HepG2 (cell line): ENCODE measurements at regions of chr18 and their contacts with region 1.

Region 1: GRCh38 chr18:5969989-5970403 is 74.7 kb upstream of the TMEM200C start:
- DNase-seq: peak; percentile 87
- ATAC-seq: peak; percentile 98
- H3K4me3 ChIP-seq: no peak overlapping the region
- H3K27ac ChIP-seq: peak overlapping the region; percentile 64
- H3K4me1 ChIP-seq: peaks cover 52% of the 10 kb centered on the region
- H3K27me3 ChIP-seq: no peaks in the 10 kb centered on the region
- CTCF ChIP-seq: peak; percentile 73
- EP300 ChIP-seq: peak in 1 of 2 experiments; percentile 79; a peak in 2 of 4 replicates
- POLR2A ChIP-seq: no peak
- RAD21 ChIP-seq: no peak

Region 2: GRCh38 chr18:6056146-6056932 is 86.3 kb after region 1 on chr18:
- CTCF ChIA-PET with region 1: no interaction called
- POLR2A ChIA-PET with region 1: no interaction called
- in situ Hi-C with region 1: no loop called
- intact Hi-C with region 1: loop called (anchors 1 kb)
- DNase-seq: peak; percentile 57
- ATAC-seq: peak; percentile 96
- H3K4me3 ChIP-seq: no peak overlapping the region
- H3K27ac ChIP-seq: peak overlapping the region; percentile 50
- H3K4me1 ChIP-seq: peaks cover 47% of the 10 kb centered on the region
- H3K27me3 ChIP-seq: no peaks in the 10 kb centered on the region
- CTCF ChIP-seq: no peak
- EP300 ChIP-seq: no peak
- POLR2A ChIP-seq: no peak
- RAD21 ChIP-seq: no peak

Region 3: GRCh38 chr18:7158216-7158615 is 1188.2 kb after region 1 on chr18:
- CTCF ChIA-PET with region 1: no interaction called
- POLR2A ChIA-PET with region 1: no interaction called
- in situ Hi-C with region 1: no loop called
- intact Hi-C with region 1: no loop called
- DNase-seq: no peak
- ATAC-seq: no peak
- H3K4me3 ChIP-seq: no peak overlapping the region
- H3K27ac ChIP-seq: no peak overlapping the region
- H3K4me1 ChIP-seq: no peaks in the 10 kb centered on the region
- H3K27me3 ChIP-seq: peaks cover 0 to 12% of the 10 kb centered on the region in 2 experiments; a peak in 1 of 5 replicates
- CTCF ChIP-seq: no peak
- EP300 ChIP-seq: no peak
- POLR2A ChIP-seq: no peak
- RAD21 ChIP-seq: no peak